ENCODE measurements at regions of chr3 and their contacts with region 1.

Region 1: DNA sequence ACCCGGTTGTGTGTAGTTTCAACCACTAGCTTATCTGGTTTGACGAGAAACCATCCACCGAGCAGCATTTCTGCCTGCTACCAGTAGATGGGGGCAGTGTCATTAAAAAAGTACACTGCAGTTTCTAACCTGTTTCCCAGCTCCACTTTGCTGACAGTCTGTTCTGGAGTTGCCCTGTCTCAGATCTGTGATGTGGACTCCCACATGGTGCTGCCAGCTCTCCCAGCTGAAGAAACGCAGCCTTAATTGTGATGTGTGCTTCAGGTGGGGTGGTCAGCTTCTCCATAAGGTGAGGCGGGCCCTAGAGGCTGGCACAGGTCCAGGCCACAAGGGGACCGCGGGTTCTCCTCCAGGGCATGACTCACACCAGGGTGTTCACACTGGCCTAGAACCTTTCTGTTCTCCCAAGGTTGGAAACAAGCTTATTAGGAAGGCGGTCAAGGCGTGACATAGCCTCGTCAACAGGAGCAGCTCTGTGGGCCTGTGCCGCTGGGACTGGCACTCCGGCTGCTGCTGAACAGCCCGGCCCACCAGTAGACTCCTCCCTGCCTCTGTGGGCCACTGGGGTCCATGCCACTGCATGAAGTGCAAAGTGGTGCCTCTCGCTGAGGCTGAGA is 2.9 kb upstream of the FAM43A start:
- DNase-seq: peak in 8 of 9 experiments; percentile 53 to 85 (median 70)
- ATAC-seq: peak; percentile 73
- H3K4me3 ChIP-seq: no peak overlapping the region
- H3K4me3 Mint-ChIP-seq: no peak overlapping the region
- H3K27ac ChIP-seq: no peak overlapping the region
- H3K27ac Mint-ChIP-seq: no peak overlapping the region
- H3K4me1 ChIP-seq: peaks cover 31% of the 10 kb centered on the region
- H3K4me1 Mint-ChIP-seq: peaks cover 36% of the 10 kb centered on the region
- H3K27me3 ChIP-seq: no peaks in the 10 kb centered on the region
- H3K27me3 Mint-ChIP-seq: peaks cover 10% of the 10 kb centered on the region
- CTCF ChIP-seq: peak; percentile 72

Region 2: DNA sequence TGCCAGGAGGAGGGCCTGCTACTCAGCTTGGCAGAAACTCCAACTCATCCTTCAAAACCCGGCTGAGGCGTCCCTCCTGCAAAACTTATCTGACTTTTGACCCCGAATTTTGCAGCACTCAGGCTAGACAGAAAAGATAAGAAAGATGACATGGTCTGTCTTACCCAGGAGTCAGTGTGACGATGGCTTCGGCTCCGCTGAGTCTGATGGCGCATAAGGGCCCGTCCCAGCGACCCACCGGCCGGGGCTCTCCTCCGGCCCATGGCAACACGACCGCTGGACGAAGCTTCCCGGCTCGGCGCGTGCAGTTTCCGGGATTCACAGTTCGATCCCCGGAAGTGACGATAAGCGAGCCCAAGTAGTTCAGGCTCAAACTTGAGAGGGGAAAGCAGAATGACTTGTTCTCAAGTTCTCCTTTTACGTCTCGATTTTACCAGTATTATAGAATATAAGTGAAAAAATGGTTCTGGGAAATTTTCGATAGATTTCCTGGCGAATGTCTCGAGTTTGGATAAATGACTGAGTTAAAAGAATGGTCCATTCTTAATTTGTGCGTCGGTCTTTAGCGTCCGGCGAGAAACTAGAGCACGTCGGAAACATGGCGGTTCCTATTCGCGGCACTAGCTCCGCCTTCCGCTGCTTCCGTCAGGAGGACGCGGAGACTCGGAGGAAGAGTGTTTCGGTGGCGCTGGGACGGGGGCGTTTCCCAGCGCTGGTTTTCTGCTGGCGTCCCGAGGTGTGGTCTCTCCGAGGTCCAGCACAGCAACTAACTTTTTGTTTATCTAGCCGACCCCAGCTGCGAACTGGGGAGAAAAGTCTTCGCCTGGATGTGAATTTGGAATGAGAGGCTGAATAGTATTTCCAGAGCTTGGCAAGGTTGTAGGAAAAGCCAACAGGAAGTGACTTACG is 10.6 kb before region 1 on chr3 and contains the start of gene LSG1:
- CTCF ChIA-PET with region 1: interaction called, 66 read pairs
- POLR2A ChIA-PET with region 1: interaction called, 41 read pairs
- intact Hi-C with region 1: loop called in 1 of 2 experiments (anchors 1 kb)
- DNase-seq: peak; percentile 75 to 97 (median 91)
- ATAC-seq: peak; percentile 97
- H3K4me3 ChIP-seq: peak within 1 kb of the TSS; percentile 82 to 83
- H3K4me3 Mint-ChIP-seq: peak within 1 kb of the TSS; percentile 98
- H3K27ac ChIP-seq: peak within 1 kb of the TSS; percentile 88 to 92
- H3K27ac Mint-ChIP-seq: peak within 1 kb of the TSS; percentile 99
- H3K4me1 ChIP-seq: peaks cover 15% of the 10 kb centered on the region
- H3K4me1 Mint-ChIP-seq: peaks cover 45% of the 10 kb centered on the region
- H3K27me3 ChIP-seq: no peaks in the 10 kb centered on the region
- H3K27me3 Mint-ChIP-seq: no peaks in the 10 kb centered on the region
- CTCF ChIP-seq: no peak
- total RNA-seq, gene LSG1: 63.8 to 69.6 TPM

Region 3: DNA sequence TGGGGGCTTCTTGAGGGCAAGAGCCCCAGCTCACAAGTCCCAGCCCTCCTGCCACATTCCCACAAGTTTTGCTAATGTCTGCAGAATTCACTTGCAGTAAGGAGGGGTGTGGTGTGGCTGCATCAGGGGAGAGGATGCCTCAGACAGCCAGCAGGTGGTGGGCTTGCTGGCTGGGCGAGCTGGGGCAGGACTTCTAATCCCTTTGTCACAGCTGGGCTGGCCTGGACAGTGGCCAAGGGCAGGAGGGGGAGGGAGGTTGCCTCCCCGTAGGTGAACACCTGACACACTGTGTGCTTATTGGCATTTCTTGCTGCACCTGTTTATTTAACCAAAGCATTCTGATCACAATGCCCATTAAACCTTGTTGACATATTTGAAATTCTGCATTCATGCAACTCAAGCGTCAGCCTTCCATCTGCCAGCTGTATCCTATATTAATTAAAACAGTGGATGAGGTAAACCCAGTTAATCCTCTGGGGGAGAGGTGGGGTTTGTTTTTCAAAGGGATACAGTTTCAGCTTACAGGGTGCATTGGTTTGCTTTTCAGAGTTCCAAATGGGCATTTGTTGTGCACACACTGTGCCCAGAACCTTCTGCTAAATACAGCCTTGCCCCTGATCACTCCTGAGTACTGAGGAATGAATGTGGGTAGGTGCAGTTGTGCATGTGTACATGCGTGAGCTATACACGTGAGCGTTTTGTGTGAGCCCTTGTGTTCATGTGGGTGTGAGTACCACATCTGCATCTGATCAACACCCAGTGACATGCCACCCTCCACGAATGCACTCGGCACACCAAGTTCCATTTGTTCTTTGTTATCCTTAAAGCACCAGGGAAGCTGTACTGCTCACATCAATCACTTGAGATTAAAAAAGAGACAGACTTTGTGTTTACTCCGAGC is 319.4 kb after region 1 on chr3:
- CTCF ChIA-PET with region 1: interaction called, 15 read pairs
- POLR2A ChIA-PET with region 1: no interaction called
- intact Hi-C with region 1: loop called in 1 of 2 experiments (anchors 5 kb)
- DNase-seq: peak in 4 of 9 experiments; percentile 21 to 51 (median 42)
- ATAC-seq: peak; percentile 46
- H3K4me3 ChIP-seq: no peak overlapping the region
- H3K4me3 Mint-ChIP-seq: no peak overlapping the region
- H3K27ac ChIP-seq: no peak overlapping the region
- H3K27ac Mint-ChIP-seq: no peak overlapping the region
- H3K4me1 ChIP-seq: peaks cover 4% of the 10 kb centered on the region
- H3K4me1 Mint-ChIP-seq: no peaks in the 10 kb centered on the region
- H3K27me3 ChIP-seq: no peaks in the 10 kb centered on the region
- H3K27me3 Mint-ChIP-seq: peaks cover 8% of the 10 kb centered on the region
- CTCF ChIP-seq: no peak

Region 4: DNA sequence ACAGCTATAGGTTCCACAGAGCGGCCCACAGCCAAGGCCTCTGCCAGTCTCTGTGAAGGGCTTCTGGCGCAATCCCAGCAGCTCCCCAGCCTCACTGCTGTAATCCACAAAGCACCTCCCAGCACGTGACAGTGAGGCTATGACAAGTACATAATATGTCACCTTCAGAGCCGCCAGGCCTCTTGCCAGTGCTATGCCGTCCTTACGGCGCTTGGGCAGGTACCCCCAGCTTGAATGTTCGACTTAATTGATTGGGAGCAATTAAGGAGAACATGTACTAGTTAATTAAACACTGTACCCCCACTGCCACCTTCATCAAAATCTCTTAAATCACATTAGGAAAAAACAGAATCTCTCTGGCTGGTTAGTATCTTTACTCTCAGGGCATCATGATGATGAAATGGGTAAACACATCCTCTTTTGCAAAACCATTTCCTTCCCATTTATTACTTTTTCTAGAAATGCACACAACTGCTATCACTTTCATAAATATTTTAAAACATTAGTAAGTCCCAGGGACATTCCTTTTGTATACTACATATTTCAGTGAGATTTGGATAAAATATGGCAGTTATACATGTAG is 418.3 kb after region 1 on chr3:
- CTCF ChIA-PET with region 1: interaction called, 98 read pairs
- POLR2A ChIA-PET with region 1: interaction called, 4 read pairs
- intact Hi-C with region 1: loop called (anchors 1 kb)
- DNase-seq: peak in 1 of 9 experiments; percentile 49
- ATAC-seq: no peak
- H3K4me3 ChIP-seq: no peak overlapping the region
- H3K4me3 Mint-ChIP-seq: no peak overlapping the region
- H3K27ac ChIP-seq: peak overlapping the region in 1 of 2 experiments; percentile 8
- H3K27ac Mint-ChIP-seq: peak overlapping the region; percentile 30
- H3K4me1 ChIP-seq: no peaks in the 10 kb centered on the region
- H3K4me1 Mint-ChIP-seq: peaks cover 6% of the 10 kb centered on the region
- H3K27me3 ChIP-seq: no peaks in the 10 kb centered on the region
- H3K27me3 Mint-ChIP-seq: no peaks in the 10 kb centered on the region
- CTCF ChIP-seq: no peak

Region 5: DNA sequence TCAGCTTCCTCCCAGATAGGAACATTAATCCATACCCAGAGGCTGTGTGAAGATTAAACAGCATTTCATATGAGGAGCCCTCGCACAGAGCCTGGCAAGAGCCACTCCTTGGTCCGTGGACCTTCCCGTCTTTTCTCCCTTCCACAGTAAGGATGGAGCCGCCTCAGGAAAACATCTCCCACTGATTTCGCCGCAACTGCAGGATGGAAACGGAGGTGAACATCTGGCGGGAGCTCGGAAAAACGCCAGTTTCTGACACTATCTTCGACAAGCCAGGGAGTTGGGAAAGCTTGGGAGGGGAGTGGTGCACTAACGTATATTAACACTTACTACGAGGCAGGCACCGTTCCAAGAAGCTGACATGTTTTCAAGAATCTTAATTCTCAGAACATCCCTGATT is 430.2 kb after region 1 on chr3:
- CTCF ChIA-PET with region 1: interaction called, 98 read pairs
- POLR2A ChIA-PET with region 1: no interaction called
- intact Hi-C with region 1: no loop called
- DNase-seq: no peak
- ATAC-seq: no peak
- H3K4me3 ChIP-seq: no peak overlapping the region
- H3K4me3 Mint-ChIP-seq: no peak overlapping the region
- H3K27ac ChIP-seq: no peak overlapping the region
- H3K27ac Mint-ChIP-seq: no peak overlapping the region
- H3K4me1 ChIP-seq: no peaks in the 10 kb centered on the region
- H3K4me1 Mint-ChIP-seq: peaks cover 3% of the 10 kb centered on the region
- H3K27me3 ChIP-seq: no peaks in the 10 kb centered on the region
- H3K27me3 Mint-ChIP-seq: no peaks in the 10 kb centered on the region
- CTCF ChIP-seq: no peak

Region 6: DNA sequence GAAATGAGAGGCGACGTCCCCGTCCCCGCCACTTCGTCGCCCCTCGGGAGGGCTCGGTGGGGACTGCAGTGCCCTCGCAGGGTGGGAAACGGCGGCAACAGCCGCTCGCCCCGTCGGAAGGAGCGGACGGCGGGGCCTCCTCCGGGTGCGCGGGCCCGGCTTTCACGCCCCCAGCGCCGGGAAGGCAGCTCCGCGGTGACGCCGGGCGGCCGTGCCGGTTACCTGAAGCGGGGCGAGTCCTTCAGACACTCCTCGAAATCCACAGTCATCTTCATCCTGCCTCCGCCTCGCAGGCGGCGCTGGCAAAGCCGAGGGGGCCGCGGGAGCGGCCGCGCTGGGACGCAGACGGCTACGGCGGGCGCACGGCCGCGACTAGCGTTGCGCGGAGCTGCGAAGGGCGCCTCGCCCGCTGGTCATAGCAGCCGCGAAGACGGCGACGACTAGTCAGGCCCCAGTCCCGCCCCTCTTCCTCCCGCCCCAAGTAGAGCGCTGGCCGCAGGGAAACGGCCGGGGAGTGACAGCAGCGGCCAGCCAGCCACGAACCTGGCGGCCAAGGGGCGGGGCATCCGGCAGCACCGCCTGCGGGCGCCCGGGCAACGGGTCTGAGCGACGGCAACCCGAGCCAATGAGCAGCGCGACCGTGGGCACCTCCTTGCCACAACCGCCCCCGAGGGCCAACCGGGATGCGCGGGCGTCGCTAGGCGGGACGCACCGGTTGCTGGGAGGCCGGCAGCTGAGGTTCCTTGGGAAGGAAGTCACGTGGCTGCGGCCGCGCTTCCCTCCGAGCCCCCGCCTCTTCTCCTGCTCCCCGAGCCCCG is 760.0 kb after region 1 on chr3 and contains the start of gene ACAP2:
- CTCF ChIA-PET with region 1: no interaction called
- POLR2A ChIA-PET with region 1: no interaction called
- intact Hi-C with region 1: loop called in 1 of 2 experiments (anchors 5 kb)
- DNase-seq: peak; percentile 95 to 99 (median 99)
- ATAC-seq: peak; percentile 90
- H3K4me3 ChIP-seq: peak within 1 kb of the TSS; percentile 82 to 88
- H3K4me3 Mint-ChIP-seq: peak within 1 kb of the TSS; percentile 95
- H3K27ac ChIP-seq: peak within 1 kb of the TSS; percentile 74 to 82
- H3K27ac Mint-ChIP-seq: peak within 1 kb of the TSS; percentile 92
- H3K4me1 ChIP-seq: peaks cover 39% of the 10 kb centered on the region
- H3K4me1 Mint-ChIP-seq: peaks cover 64% of the 10 kb centered on the region
- H3K27me3 ChIP-seq: no peaks in the 10 kb centered on the region
- H3K27me3 Mint-ChIP-seq: no peaks in the 10 kb centered on the region
- CTCF ChIP-seq: no peak
- total RNA-seq, gene ACAP2: 38.9 to 41.1 TPM

Measured in CD8-positive, alpha-beta T cell (primary cell).